ENCODE measurements at regions of chr17 and their contacts with region 1.

Region 1: GRCh38 chr17:78112518-78113226 is 15.9 kb downstream of the TMC6 start:
- DNase-seq: peak; percentile 13
- ATAC-seq: peak; percentile 94
- H3K4me3 ChIP-seq: no peak overlapping the region
- H3K27ac ChIP-seq: no peak overlapping the region
- H3K4me1 ChIP-seq: no peaks in the 10 kb centered on the region
- H3K27me3 ChIP-seq: peaks cover 9% of the 10 kb centered on the region; the same call in 1 of the 2 replicates
- CTCF ChIP-seq: peak; percentile 95
- POLR2A ChIP-seq: no peak
- RAD21 ChIP-seq: peak; percentile 91

Region 2: DNA sequence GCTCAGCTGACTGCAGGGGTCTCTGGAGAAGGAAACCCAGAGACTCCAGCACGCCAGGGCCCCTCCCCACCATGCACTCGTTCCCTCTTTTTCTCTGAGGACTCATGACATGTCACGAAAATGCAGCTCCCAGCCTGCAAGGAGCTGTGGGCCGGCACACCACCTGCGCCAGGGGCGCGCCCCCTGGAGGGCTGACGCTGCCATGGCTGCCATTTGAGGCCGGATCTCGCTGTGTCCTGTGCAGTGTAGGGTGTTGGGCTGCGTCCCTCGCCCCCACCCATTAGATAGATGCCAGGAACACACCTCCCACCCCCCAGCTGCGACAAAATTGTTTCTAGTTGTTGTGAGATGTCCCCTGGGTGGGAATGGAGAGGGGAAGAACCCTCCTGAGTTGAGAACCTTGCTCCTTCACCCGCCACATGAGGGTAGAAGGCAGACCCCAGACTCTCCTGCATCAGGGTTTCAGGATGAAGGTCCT is 63.9 kb after region 1 on chr17:
- CTCF ChIA-PET with region 1: no interaction called
- POLR2A ChIA-PET with region 1: no interaction called
- dilution Hi-C with region 1: no loop called
- in situ Hi-C with region 1: loop called (anchors 5 kb)
- intact Hi-C with region 1: loop called (anchors 1 kb)
- DNase-seq: peak; percentile 22
- ATAC-seq: peak; percentile 52
- H3K4me3 ChIP-seq: no peak overlapping the region
- H3K27ac ChIP-seq: no peak overlapping the region
- H3K4me1 ChIP-seq: peaks cover 24% of the 10 kb centered on the region
- H3K27me3 ChIP-seq: no peaks in the 10 kb centered on the region
- CTCF ChIP-seq: peak; percentile 68
- POLR2A ChIP-seq: peak; percentile 24; the same call in 1 of the 2 replicates
- RAD21 ChIP-seq: peak; percentile 53

Region 3: DNA sequence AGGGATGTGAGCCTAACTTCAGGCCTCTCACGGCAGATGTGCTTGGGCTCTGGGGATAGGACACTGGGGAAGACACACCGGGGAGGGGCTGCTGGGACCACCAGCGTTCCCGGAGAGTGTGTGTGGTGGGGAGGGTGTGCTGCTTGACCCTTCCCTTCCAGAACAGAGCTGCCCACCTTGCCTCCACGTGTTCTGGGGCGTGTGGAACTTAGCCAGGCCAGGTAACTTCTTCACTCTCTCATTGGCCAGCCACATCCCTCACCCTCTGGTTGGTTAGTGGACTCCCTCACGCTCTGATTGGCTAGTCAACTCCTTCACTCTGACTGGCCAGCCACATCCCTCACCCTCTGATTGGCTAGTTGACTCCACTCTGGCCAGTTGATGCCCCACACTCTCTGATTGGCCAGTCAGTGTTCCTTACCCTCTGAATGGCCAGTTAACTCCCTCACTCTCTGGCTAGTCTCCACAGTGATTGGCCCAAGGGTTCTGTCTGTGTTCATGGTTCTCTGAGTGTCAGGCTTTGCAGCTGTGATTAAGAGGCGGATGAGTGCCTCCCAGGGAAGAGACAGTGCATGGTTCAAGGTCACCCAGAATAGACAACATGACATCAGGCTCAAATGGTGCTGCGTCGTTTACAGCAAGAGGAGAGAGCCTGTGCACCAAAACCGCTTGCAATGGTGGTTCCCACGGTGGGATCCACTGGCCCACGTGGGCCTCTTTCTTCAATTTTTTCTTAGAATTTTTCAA is 128.8 kb after region 1 on chr17:
- CTCF ChIA-PET with region 1: interaction called, 3 read pairs
- POLR2A ChIA-PET with region 1: no interaction called
- dilution Hi-C with region 1: no loop called
- in situ Hi-C with region 1: loop called (anchors 10 kb)
- intact Hi-C with region 1: no loop called
- DNase-seq: peak; percentile 47
- ATAC-seq: peak; percentile 43; the same call in 1 of the 2 replicates
- H3K4me3 ChIP-seq: no peak overlapping the region
- H3K27ac ChIP-seq: no peak overlapping the region
- H3K4me1 ChIP-seq: peaks cover 2% of the 10 kb centered on the region; the same call in 1 of the 2 replicates
- H3K27me3 ChIP-seq: peaks cover 18% of the 10 kb centered on the region
- CTCF ChIP-seq: no peak
- POLR2A ChIP-seq: no peak
- RAD21 ChIP-seq: no peak

Region 4: DNA sequence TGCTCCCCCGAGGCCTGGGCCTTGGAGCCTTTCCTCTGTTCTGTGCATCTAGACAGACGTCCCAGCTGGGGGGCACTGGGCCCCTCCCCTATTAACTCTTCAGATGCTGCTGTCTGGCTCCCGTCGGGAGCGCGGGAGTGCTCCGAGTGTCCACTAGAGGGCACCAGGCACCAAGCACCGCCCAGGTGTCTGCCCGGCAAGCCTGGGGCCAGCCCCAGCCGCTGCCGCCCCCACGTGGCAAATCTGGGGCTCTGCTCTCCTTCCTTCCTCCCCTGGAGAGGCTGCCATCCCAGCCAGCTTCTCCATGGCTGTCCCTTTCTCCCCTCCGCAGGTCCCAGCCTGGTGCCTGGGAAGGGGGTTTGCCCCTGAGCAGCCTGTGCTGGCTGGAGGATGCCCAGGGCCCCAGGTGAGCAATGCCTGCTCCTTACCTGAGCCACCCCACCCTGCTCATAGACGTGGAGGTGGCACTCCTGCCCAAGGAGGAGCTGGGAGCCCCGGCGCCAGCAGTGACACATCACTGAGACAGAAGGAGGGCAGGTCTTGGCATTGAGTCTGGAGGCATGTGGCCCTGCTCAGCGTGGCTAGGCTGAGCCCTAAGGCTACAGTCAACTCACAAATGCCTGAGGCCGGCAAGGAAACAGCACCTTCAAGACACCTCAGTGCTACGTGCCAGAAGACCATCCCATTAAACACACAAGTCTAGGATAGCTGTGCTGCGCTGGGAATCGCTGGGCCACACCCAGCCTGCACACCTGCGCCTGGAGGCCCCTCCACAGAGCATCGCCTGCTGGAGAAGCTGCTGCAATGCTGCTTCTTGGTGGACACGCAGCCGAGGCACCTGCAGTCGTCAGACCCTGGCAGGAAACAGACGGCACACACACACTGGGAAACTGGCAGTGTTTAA is 138.5 kb after region 1 on chr17:
- CTCF ChIA-PET with region 1: no interaction called
- POLR2A ChIA-PET with region 1: interaction called, 5 read pairs
- dilution Hi-C with region 1: no loop called
- in situ Hi-C with region 1: loop called (anchors 10 kb)
- intact Hi-C with region 1: loop called (anchors 1 kb)
- DNase-seq: peak; percentile 76
- ATAC-seq: peak; percentile 91
- H3K4me3 ChIP-seq: no peak overlapping the region
- H3K27ac ChIP-seq: no peak overlapping the region
- H3K4me1 ChIP-seq: peaks cover 6% of the 10 kb centered on the region
- H3K27me3 ChIP-seq: peaks cover 3% of the 10 kb centered on the region; the same call in 1 of the 2 replicates
- CTCF ChIP-seq: peak; percentile 100
- POLR2A ChIP-seq: 0 out of 2 replicates have a peak, but pooled peaks have one; percentile 38
- RAD21 ChIP-seq: peak; percentile 98